Activated naive CD4-positive, alpha-beta T cell treated with anti-CD3 and anti-CD28 coated beads for 36 hours (primary cell): ENCODE measurements at regions of chr1 and their contacts with region 1.

Region 1: GRCh38 chr1:21956720-21957552 is 19.8 kb upstream of the HSPG2 start:
- DNase-seq: peak; percentile 69
- H3K4me3 Mint-ChIP-seq: peak overlapping the region; percentile 55
- H3K27ac Mint-ChIP-seq: peak overlapping the region; percentile 86
- H3K4me1 Mint-ChIP-seq: peaks cover 29% of the 10 kb centered on the region
- H3K27me3 Mint-ChIP-seq: no peaks in the 10 kb centered on the region

Region 2: GRCh38 chr1:21937372-21938221 is 19.3 kb before region 1 on chr1:
- CTCF ChIA-PET with region 1: interaction called, 5 read pairs
- intact Hi-C with region 1: loop called (anchors 2 kb)
- DNase-seq: peak; percentile 62
- H3K4me3 Mint-ChIP-seq: peak overlapping the region; percentile 75
- H3K27ac Mint-ChIP-seq: no peak overlapping the region
- H3K4me1 Mint-ChIP-seq: peaks cover 22% of the 10 kb centered on the region
- H3K27me3 Mint-ChIP-seq: peaks cover 3% of the 10 kb centered on the region